Pancreas (tissue), 10 donors: ENCODE measurements at regions of chr6 and their contacts with region 1.

Region 1: GRCh38 chr6:136719280-136720044 is 72.8 kb downstream of the MAP3K5 start:
- DNase-seq: no peak
- ATAC-seq: peak in 1 of 4 donors; percentile 22
- H3K4me3 ChIP-seq: no peak overlapping the region
- H3K27ac ChIP-seq: no peak overlapping the region
- H3K4me1 ChIP-seq: peaks cover 11 to 31% (median 16%) of the 10 kb centered on the region in 3 donors
- H3K27me3 ChIP-seq: no peaks in the 10 kb centered on the region
- CTCF ChIP-seq: no peak

Region 2: GRCh38 chr6:136761227-136761922 is 41.9 kb after region 1 on chr6:
- intact Hi-C with region 1: loop called in 1 of 3 experiments (anchors 10 kb)
- DNase-seq: peak in 1 of 6 donors; percentile 53
- ATAC-seq: peak; percentile 54 to 78 (median 65)
- H3K4me3 ChIP-seq: no peak overlapping the region
- H3K27ac ChIP-seq: peak overlapping the region in 3 of 4 donors; percentile 22 to 59 (median 46)
- H3K4me1 ChIP-seq: peaks cover 18 to 38% (median 36%) of the 10 kb centered on the region in 3 donors
- H3K27me3 ChIP-seq: no peaks in the 10 kb centered on the region
- CTCF ChIP-seq: no peak